Activated T-helper 2 cell treated with anti-CD3 and anti-CD28 coated beads, Interferon-gamma antibody, Interleukin-2, Interleukin-4, amounts not matched to agents 10 μg/mL and 5 μg/mL and 100 μg/mL, durations not matched to agents 14 hours and 24 hours and 36 hours (primary cell): ENCODE measurements at regions of chr19 and their contacts with region 1.

Region 1: DNA sequence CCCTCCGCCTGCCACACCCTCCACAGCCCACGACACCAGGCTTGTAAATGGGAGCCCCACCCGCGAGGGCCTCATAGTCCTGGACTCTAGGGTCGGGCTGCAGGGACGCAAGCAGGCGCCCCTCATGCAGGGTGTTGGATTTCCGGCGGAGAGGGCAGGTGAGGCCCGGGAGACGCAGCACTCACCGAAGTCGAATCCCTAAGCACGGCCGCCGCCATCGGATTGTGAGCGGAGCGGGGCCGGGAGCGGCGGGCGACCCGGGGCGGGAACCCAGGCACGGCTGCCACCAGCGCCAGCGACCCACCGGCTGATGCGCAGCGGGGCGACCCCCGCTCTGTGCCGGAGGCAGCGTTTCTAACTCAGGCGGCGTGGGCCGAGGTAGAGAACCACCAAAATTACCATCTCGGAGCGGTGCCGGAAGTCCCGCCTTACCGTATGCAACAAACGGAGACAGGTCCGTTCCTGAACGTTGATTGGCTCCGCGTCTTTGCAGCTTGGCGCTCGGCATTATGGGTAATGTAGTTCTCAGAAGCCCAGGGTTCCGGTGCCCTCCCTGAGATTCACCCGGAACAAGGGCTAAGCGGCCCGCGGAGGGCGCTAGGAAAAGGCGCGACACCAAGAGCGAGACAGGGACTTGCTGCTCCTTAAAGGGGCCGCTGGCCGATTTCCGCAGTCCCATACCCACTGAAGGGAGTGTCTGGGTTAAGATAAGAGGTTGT is at the start of gene ZNF416:
- DNase-seq: peak; percentile 95
- H3K4me3 Mint-ChIP-seq: peak within 1 kb of the TSS; percentile 79
- H3K27ac Mint-ChIP-seq: peak within 1 kb of the TSS; percentile 76
- H3K4me1 Mint-ChIP-seq: peaks cover 13% of the 10 kb centered on the region
- H3K27me3 Mint-ChIP-seq: no peaks in the 10 kb centered on the region
- total RNA-seq, gene ZNF416: 2.9 and 3.5 TPM in 2 replicates

Region 2: DNA sequence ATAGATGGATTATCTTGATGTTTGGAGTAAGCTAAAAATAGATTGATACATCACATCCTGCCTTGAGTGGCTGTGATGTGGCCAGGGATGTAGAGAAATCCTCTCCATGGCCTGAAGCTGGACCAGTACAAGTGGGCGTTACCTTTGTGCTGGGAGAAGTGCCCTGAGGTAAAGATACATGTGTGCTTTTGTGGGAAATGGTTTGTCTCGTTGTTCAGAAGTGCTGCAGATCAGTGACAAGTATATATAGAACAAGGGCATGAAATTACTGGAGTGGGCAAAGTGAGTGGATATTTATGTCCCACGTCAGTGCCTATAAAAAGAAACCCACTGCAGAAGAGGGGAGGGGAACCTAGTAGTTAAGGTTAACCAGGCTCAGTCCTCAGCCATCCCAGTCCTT is 239.8 kb before region 1 on chr19:
- intact Hi-C with region 1: no loop called
- DNase-seq: no peak
- H3K4me3 Mint-ChIP-seq: no peak overlapping the region
- H3K27ac Mint-ChIP-seq: no peak overlapping the region
- H3K4me1 Mint-ChIP-seq: no peaks in the 10 kb centered on the region
- H3K27me3 Mint-ChIP-seq: no peaks in the 10 kb centered on the region

Region 3: GRCh38 chr19:57410877-57411671 is 167.6 kb before region 1 on chr19 and contains the start of gene ZNF17:
- intact Hi-C with region 1: loop called (anchors 1 kb)
- DNase-seq: peak; percentile 88
- H3K4me3 Mint-ChIP-seq: peak within 1 kb of the TSS; percentile 92
- H3K27ac Mint-ChIP-seq: peak within 1 kb of the TSS; percentile 63
- H3K4me1 Mint-ChIP-seq: peaks cover 11% of the 10 kb centered on the region
- H3K27me3 Mint-ChIP-seq: no peaks in the 10 kb centered on the region
- total RNA-seq, gene ZNF17: 7.7 and 9.3 TPM in 2 replicates

Region 4: GRCh38 chr19:57559404-57560025 is 19.1 kb before region 1 on chr19 and contains the start of gene ZNF550:
- intact Hi-C with region 1: loop called (anchors 1 kb)
- DNase-seq: peak; percentile 82
- H3K4me3 Mint-ChIP-seq: peak within 1 kb of the TSS; percentile 88
- H3K27ac Mint-ChIP-seq: peak within 1 kb of the TSS; percentile 76
- H3K4me1 Mint-ChIP-seq: peaks cover 18% of the 10 kb centered on the region
- H3K27me3 Mint-ChIP-seq: no peaks in the 10 kb centered on the region
- total RNA-seq, gene ZNF550: 6.9 and 7.7 TPM in 2 replicates

Region 5: GRCh38 chr19:57613941-57614743 is 35.5 kb after region 1 on chr19 and contains the start of gene ZNF134:
- intact Hi-C with region 1: loop called (anchors 2 kb)
- DNase-seq: peak; percentile 84
- H3K4me3 Mint-ChIP-seq: peak within 1 kb of the TSS; percentile 92
- H3K27ac Mint-ChIP-seq: peak within 1 kb of the TSS; percentile 61
- H3K4me1 Mint-ChIP-seq: peaks cover 9% of the 10 kb centered on the region
- H3K27me3 Mint-ChIP-seq: no peaks in the 10 kb centered on the region
- total RNA-seq, gene ZNF134: 7.9 and 8.5 TPM in 2 replicates

Region 6: DNA sequence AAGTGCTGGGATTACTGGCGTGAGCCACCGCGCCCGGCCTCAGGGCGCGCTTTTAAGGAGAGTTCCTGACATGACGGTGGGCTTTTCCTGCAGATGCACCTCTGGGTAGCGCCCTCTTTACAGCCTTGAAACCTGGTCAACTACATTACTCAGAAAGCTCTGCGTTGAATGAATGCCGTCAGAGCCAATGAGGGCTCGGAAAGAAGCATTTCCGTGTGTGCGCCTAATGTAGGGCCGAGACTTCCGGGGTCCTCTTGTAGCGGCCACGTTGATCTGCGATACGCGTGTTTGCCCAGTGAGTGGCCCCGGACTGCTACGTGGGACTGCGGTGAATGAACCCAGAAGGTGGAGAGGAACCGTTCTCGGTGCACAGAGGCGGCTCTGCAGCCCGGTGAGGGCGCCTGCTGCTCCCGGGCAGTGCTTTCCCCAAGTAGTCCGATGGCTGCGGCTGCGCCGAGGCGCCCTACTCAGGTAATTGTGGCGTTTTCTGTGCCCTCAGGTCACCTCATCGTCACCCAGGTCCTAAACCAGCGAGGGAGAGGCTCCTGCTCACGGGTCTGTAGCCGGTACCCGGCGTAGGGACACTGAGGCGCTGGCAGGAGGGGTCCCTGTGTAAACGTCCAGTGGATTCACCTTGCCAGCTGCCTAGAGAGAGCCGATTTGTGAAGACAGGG is 241.0 kb after region 1 on chr19:
- intact Hi-C with region 1: loop called (anchors 10 kb)
- DNase-seq: peak; percentile 80
- H3K4me3 Mint-ChIP-seq: peak overlapping the region; percentile 95
- H3K27ac Mint-ChIP-seq: peak overlapping the region; percentile 99
- H3K4me1 Mint-ChIP-seq: peaks cover 39% of the 10 kb centered on the region
- H3K27me3 Mint-ChIP-seq: no peaks in the 10 kb centered on the region